Astrocyte of the cerebellum (primary cell): ENCODE measurements at regions of chr15 and their contacts with region 1.

Region 1: DNA sequence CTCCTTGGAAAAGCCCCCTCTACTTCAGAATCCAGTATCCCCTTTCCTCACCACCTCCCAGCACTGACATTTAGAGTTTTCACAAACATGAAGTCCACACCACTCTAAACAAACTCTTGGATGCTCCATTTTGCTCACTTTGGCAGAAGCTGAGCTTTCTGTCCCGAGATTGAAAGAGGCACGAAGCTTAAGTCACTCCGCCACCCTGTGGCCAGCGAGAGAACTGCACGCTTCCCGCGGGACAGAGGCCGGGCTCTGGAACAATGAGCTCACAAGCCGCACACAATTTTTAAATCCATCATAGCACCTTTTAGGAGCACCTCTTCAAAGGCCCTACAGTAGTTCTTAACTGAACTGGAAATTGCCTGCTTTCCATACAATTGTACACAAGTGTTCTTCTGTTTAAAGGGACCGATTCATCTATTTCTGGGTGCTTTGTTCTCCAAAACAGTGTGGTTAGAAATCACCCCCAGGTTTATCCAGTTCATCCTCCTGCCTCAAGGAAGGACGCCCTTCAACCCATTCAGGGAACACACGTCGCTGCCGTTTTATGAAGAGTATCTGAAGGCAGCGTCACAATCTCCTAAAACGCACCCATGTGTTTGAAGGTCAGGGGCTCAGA is 226.1 kb downstream of the VPS13C start:
- DNase-seq: peak; percentile 78
- H3K4me3 ChIP-seq: no peak overlapping the region
- CTCF ChIP-seq: peak; percentile 97

Region 2: GRCh38 chr15:60592371-60593169 is 1241.6 kb before region 1 on chr15:
- in situ Hi-C with region 1: loop called (anchors 25 kb)
- DNase-seq: no peak
- H3K4me3 ChIP-seq: peak overlapping the region; percentile 51
- CTCF ChIP-seq: no peak

Region 3: DNA sequence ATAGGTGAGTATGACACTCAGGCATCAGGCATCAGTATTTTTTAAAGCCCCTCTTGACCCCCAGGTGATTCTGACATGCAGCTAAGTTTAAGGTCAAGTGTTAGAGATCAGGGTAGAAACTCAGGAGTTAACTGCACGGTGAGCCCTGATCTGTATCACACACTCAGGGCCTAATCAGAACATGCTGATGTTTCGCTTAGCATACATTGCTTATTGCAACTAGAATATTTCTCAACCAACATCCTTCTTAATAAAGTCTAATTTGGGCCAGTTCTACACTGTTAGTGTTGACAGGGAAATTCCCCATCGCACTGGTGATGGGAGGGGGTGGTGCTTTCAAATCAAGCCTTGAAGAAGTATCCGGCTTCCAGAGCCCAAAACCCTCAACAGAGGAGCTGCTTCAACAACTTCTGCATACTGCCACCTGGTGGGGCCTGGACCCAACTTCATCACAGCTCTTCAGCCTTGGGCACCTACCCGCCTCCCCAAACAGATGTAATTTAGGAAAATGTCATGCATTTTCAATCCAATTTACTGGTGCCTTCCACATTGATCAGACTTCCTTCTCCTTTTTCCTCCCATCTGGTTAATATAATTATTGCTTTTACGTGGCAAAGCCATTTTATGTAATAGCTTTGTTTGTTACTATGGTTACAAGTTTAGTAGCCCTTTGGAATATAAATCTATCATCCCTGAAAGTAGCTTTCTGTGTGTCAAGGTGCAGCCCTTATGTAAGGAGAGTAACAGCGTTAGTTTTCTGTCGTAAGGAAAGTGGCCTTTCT is 917.3 kb before region 1 on chr15:
- in situ Hi-C with region 1: loop called (anchors 25 kb)
- DNase-seq: peak; percentile 66
- H3K4me3 ChIP-seq: no peak overlapping the region
- CTCF ChIP-seq: peak; percentile 82

Region 4: DNA sequence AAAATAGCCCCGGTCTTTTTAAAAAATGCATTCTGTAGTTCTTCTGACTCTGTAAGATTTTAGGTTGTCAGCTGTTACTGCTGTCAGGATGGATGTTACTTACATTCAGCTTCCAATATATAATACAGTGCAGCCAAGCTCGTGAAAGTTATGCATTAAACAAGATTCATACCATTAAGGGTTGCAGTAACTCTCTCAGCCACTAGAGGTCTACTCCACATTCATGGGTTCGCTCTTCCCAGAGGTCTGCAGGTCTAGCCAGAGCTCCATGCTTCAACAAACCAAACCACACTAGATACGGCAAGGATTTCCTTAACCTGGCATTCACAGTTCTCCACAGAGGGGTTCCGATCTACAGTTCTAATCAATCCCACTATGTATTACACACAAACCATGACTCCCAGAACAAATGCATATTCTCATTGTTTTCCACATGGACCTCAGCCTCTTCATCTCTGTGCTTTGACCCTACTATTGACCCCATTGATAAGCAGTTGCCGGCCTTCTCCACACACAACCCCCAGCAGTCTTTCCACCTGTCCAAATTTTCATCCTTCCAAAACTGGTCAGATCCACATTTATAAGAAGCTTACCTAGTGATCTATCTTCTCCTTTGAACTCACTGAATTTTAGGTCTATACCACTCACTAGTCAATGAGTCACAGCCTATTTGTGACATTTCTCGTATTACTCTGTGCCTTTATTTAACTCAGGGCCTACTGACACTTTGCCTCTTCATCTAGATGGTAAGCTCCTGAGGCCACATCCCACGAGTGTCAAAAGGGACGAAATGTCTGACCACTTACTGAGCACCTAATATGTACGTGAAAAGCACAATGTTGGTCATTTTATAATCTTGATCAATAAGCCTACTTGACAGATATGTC is 638.8 kb before region 1 on chr15:
- in situ Hi-C with region 1: loop called (anchors 25 kb)
- DNase-seq: no peak
- H3K4me3 ChIP-seq: no peak overlapping the region
- CTCF ChIP-seq: peak; percentile 77

Region 5: DNA sequence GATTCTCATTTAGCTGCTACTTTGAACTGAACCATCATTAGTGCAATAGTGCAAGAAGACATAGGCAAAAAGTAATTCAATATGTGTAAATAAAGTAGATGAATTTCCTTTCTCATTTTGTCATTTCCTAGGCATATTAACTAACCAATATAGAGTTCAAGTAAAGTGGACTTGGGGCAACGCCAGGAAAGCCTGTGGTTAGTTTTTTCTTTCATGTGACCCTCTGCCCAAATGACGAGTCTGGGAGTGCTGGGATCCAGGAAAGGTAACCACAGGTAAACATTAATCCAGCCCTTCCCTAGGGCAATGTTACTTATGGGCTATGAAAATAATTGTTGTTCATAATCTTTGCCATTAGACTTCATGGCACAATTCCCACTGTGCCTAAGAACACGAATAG is 45.0 kb after region 1 on chr15:
- in situ Hi-C with region 1: no loop called
- DNase-seq: peak; percentile 19
- H3K4me3 ChIP-seq: no peak overlapping the region
- CTCF ChIP-seq: no peak